ENCODE measurements at regions of chr20 and their contacts with region 1.

Region 1: GRCh38 chr20:43456809-43457639 is 672 bp upstream of the SRSF6 start:
- DNase-seq: peak; percentile 83 to 90 (median 85)
- H3K4me3 ChIP-seq: peak overlapping the region; percentile 97
- H3K27ac ChIP-seq: peak overlapping the region; percentile 99 to 100
- H3K4me1 ChIP-seq: peaks cover 7% of the 10 kb centered on the region
- H3K27me3 ChIP-seq: no peaks in the 10 kb centered on the region
- CTCF ChIP-seq: no peak
- EP300 ChIP-seq: no peak
- POLR2A ChIP-seq: no peak

Region 2: GRCh38 chr20:43583982-43584432 is 127.0 kb after region 1 on chr20:
- intact Hi-C with region 1: loop called in 2 of 4 experiments (anchors 10 kb)
- DNase-seq: peak; percentile 42 to 72 (median 60)
- H3K4me3 ChIP-seq: no peak overlapping the region
- H3K27ac ChIP-seq: no peak overlapping the region
- H3K4me1 ChIP-seq: no peaks in the 10 kb centered on the region
- H3K27me3 ChIP-seq: no peaks in the 10 kb centered on the region
- CTCF ChIP-seq: no peak
- EP300 ChIP-seq: no peak
- POLR2A ChIP-seq: no peak

Region 3: GRCh38 chr20:44196271-44196670 is 739.2 kb after region 1 on chr20:
- intact Hi-C with region 1: loop called in 1 of 4 experiments (anchors 10 kb)
- DNase-seq: no peak
- H3K4me3 ChIP-seq: no peak overlapping the region
- H3K27ac ChIP-seq: no peak overlapping the region
- H3K4me1 ChIP-seq: no peaks in the 10 kb centered on the region
- H3K27me3 ChIP-seq: no peaks in the 10 kb centered on the region
- CTCF ChIP-seq: no peak
- EP300 ChIP-seq: no peak
- POLR2A ChIP-seq: no peak